ENCODE measurements at regions of chr12 and their contacts with region 1.

Region 1: DNA sequence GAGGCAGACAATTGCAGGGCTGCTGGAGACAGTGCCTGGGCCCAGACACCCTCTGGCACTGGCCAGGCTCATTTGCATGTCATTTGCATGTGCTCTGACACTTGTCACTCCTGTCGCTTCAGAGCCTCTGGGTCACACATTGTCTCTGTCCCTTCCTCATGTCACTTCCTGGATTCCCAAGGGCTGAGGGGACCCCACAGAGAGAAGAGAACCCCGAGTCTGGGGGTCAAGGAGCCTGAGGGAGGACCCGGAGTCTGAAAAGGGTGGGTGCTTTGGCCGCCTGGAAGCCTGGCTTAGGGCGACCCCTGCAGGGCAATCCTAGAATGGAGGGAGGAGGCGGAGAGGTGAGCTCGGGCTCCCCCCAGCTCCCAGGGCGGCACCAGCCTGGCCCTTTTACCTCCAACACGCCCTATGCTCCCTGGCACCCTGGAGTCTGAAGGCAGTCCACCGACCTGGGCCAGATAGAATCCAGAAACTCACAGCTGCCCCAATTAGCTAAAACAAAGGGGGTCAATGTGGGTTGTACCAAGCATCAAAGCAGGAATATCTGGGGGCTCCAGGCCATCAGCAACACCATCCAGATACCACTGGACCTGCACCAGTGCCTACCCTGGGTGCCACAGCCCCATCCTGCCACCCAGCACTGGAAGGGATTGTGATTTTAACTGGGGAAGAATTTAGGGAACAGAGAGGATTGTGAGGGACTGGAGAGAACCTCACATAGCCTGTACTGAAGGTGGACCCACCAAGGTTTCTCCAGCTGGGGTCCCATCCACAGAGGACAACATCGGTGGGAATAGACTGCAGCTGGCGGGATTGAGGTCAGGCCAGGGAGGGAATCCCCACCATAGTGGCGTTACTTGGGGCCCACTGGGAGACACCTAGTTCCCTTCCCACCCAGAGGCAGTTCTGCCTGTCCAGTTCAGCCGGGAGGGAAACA is 21.8 kb upstream of the KRT78 start:
- DNase-seq: peak; percentile 44 to 75
- H3K4me3 ChIP-seq: peak overlapping the region; percentile 23; the same call in 1 of the 2 replicates
- H3K27ac ChIP-seq: peak overlapping the region; percentile 100
- H3K4me1 ChIP-seq: peaks cover 51% of the 10 kb centered on the region
- H3K27me3 ChIP-seq: no peaks in the 10 kb centered on the region
- CTCF ChIP-seq: peak; percentile 94

Region 2: GRCh38 chr12:52213512-52214420 is 656.9 kb before region 1 on chr12:
- CTCF ChIA-PET with region 1: no interaction called
- POLR2A ChIA-PET with region 1: no interaction called
- intact Hi-C with region 1: loop called (anchors 5 kb)
- DNase-seq: peak; percentile 79 to 93
- H3K4me3 ChIP-seq: no peak overlapping the region
- H3K27ac ChIP-seq: peak overlapping the region; percentile 85
- H3K4me1 ChIP-seq: peaks cover 56% of the 10 kb centered on the region
- H3K27me3 ChIP-seq: no peaks in the 10 kb centered on the region
- CTCF ChIP-seq: peak; percentile 98

Region 3: GRCh38 chr12:52327052-52327829 is 543.4 kb before region 1 on chr12:
- CTCF ChIA-PET with region 1: interaction called, 3 read pairs
- POLR2A ChIA-PET with region 1: no interaction called
- intact Hi-C with region 1: loop called (anchors 5 kb)
- DNase-seq: peak; percentile 86 to 94
- H3K4me3 ChIP-seq: no peak overlapping the region
- H3K27ac ChIP-seq: no peak overlapping the region
- H3K4me1 ChIP-seq: peaks cover 12% of the 10 kb centered on the region
- H3K27me3 ChIP-seq: no peaks in the 10 kb centered on the region
- CTCF ChIP-seq: peak; percentile 85

Region 4: GRCh38 chr12:52390739-52391617 is 479.6 kb before region 1 on chr12:
- CTCF ChIA-PET with region 1: interaction called, 6 read pairs
- POLR2A ChIA-PET with region 1: no interaction called
- intact Hi-C with region 1: loop called (anchors 5 kb)
- DNase-seq: peak in 1 of 2 experiments; percentile 31
- H3K4me3 ChIP-seq: no peak overlapping the region
- H3K27ac ChIP-seq: no peak overlapping the region
- H3K4me1 ChIP-seq: no peaks in the 10 kb centered on the region
- H3K27me3 ChIP-seq: no peaks in the 10 kb centered on the region
- CTCF ChIP-seq: peak; percentile 83

Region 5: GRCh38 chr12:52495389-52495788 is 375.2 kb before region 1 on chr12:
- CTCF ChIA-PET with region 1: interaction called, 3 read pairs
- POLR2A ChIA-PET with region 1: interaction called, 3 read pairs
- intact Hi-C with region 1: loop called (anchors 2 kb)
- DNase-seq: peak in 1 of 2 experiments; percentile 51
- H3K4me3 ChIP-seq: no peak overlapping the region
- H3K27ac ChIP-seq: no peak overlapping the region
- H3K4me1 ChIP-seq: peaks cover 41% of the 10 kb centered on the region
- H3K27me3 ChIP-seq: no peaks in the 10 kb centered on the region
- CTCF ChIP-seq: no peak

Region 6: DNA sequence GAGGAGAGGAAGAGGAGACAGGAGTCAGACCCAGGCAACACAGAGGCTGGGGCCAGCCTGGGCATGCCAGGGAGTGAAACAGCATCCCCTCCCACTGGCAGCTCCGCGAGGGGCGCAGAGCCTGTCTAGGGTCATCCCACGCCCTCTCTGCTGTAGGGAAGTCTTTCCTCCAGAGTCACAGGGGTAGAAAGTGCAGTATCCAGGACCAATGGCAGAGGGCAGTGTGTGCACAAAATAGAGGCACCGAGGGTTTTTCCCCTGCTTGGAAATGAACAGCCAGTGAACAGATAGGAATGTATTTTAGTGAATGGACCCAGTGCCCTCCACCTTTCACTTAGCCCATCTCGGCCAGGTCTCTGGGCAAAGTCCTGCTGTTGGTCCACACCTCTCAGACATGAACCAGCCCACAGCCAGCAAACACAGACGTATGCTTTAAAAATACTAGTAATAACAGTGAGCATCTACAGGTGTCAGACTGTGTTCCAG is 287.6 kb before region 1 on chr12:
- CTCF ChIA-PET with region 1: interaction called, 8 read pairs
- POLR2A ChIA-PET with region 1: no interaction called
- intact Hi-C with region 1: loop called (anchors 2 kb)
- DNase-seq: peak; percentile 53 to 80
- H3K4me3 ChIP-seq: no peak overlapping the region
- H3K27ac ChIP-seq: no peak overlapping the region
- H3K4me1 ChIP-seq: peaks cover 19% of the 10 kb centered on the region
- H3K27me3 ChIP-seq: no peaks in the 10 kb centered on the region
- CTCF ChIP-seq: peak; percentile 85

Region 7: GRCh38 chr12:52799062-52799761 is 71.4 kb before region 1 on chr12:
- CTCF ChIA-PET with region 1: no interaction called
- POLR2A ChIA-PET with region 1: no interaction called
- intact Hi-C with region 1: loop called (anchors 1 kb)
- DNase-seq: peak; percentile 67 to 97
- H3K4me3 ChIP-seq: no peak overlapping the region
- H3K27ac ChIP-seq: peak overlapping the region; percentile 88
- H3K4me1 ChIP-seq: peaks cover 65% of the 10 kb centered on the region
- H3K27me3 ChIP-seq: no peaks in the 10 kb centered on the region
- CTCF ChIP-seq: no peak